Panc1 (cell line): ENCODE measurements at regions of chr4 and their contacts with region 1.

Region 1: DNA sequence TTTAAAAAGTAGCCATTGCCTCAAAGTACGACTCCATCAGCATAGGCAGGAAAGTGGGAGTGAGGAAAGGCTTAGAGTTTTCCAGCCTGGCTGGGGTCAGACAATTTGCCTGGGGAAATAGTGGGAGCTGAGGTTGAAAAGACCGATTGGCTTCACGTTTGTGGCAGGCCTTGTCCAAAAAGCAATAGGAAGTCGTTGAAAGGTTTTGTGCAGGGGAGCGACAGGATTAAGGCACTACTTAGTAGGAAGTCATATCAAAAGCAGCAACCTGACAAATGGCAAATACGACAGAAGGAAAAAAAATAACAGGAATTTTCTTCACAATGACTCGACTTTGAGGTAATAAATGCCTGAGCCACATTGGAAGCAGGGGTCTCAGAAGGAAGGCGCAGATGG is 691 bp upstream of the EREG start:
- DNase-seq: no peak
- ATAC-seq: peak; percentile 33; the same call in 1 of the 2 replicates
- H3K4me3 ChIP-seq: peak overlapping the region; percentile 39 to 71; a peak in 3 of 4 replicates
- H3K27ac ChIP-seq: no peak overlapping the region
- H3K4me1 ChIP-seq: peaks cover 3% of the 10 kb centered on the region; the same call in 1 of the 2 replicates
- H3K27me3 ChIP-seq: no peaks in the 10 kb centered on the region
- CTCF ChIP-seq: no peak

Region 2: GRCh38 chr4:74161666-74162450 is 202.4 kb before region 1 on chr4:
- CTCF ChIA-PET with region 1: interaction called, 11 read pairs
- POLR2A ChIA-PET with region 1: interaction called, 3 read pairs
- in situ Hi-C with region 1: no loop called
- intact Hi-C with region 1: no loop called
- DNase-seq: no peak
- ATAC-seq: no peak
- H3K4me3 ChIP-seq: no peak overlapping the region
- H3K27ac ChIP-seq: no peak overlapping the region
- H3K4me1 ChIP-seq: peaks cover 3% of the 10 kb centered on the region; the same call in 1 of the 2 replicates
- H3K27me3 ChIP-seq: no peaks in the 10 kb centered on the region
- CTCF ChIP-seq: no peak